Natural killer cell (primary cell): ENCODE measurements at regions of chr5 and their contacts with region 1.

Region 1: DNA sequence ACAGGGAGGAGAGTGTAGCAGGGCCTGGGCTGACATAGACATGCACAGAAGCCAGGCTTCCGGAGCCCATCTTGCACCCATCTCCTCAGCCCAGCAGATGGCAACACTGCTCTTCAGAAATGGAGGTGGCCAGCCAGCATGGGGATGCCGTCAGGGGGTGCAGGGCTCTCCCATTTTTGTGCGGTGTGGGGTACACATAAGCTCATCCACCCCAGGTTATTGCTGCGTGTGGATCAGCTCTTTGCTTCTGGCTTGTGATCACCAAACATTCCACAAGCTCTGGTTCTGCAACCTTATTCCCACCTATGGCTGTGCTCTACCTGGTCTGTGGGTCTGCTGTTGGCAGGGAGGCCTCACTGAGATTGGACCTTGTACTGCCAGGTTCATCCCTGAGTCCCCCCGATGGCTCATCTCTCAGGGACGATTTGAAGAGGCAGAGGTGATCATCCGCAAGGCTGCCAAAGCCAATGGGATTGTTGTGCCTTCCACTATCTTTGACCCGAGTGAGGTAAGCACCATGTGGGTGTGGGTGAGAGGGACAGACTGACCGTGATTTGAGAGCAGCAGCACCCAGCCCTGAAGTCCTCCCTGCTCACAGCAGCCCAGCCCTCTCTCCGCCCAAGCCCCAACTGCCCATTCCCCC is 17.3 kb downstream of the SLC22A5 start:
- DNase-seq: peak; percentile 72 to 91
- ATAC-seq: peak; percentile 90 to 94 (median 91)
- H3K4me3 ChIP-seq: no peak overlapping the region
- H3K4me3 Mint-ChIP-seq: no peak overlapping the region
- H3K27ac ChIP-seq: no peak overlapping the region
- H3K27ac Mint-ChIP-seq: peak overlapping the region; percentile 37 to 81
- H3K4me1 ChIP-seq: peaks cover 26% of the 10 kb centered on the region
- H3K4me1 Mint-ChIP-seq: peaks cover 15 to 35% of the 10 kb centered on the region in 2 donors
- H3K27me3 ChIP-seq: no peaks in the 10 kb centered on the region
- H3K27me3 Mint-ChIP-seq: no peaks in the 10 kb centered on the region
- CTCF ChIP-seq: peak; percentile 85

Region 2: DNA sequence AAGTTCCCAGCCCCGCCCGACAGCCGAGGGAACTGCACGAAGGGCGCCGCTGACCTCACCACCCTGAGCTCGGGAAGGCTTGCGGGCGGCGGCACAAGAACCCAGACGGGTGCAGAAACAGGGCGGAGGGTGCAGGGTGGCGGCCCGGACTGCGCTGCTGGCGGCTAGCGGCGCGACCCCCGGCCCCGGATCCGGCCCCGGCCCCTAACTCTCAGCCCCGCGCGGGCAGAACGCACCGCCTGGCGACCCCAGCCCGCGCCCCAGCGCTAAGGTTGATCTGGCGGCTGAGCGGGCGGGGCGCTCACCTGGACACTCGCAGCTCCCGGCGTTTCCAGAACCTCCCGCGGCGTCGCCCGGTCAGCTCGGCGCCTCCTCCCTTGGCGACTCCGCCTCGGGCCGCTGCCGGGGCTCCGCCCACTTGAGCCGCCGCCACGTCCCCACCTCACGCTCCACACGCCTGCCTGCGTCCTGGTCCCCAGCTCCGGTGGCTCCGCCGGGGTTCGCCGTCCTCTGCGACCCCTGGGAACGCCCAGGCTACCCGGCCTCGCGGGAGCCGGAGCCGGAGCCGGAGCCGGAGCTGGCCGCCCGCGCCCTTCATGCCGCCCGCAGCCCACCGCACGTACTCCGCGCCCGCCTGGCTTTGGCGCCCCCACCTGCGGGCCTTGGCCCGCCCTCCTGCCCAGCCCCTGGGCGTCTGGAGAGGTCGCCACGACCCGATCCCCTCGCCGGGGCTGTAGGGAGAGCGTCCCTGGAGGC is 159.1 kb before region 1 on chr5 and contains the start of gene P4HA2:
- intact Hi-C with region 1: no loop called
- DNase-seq: peak; percentile 26 to 34
- ATAC-seq: peak; percentile 59 to 86 (median 85)
- H3K4me3 ChIP-seq: peak within 1 kb of the TSS; percentile 17
- H3K4me3 Mint-ChIP-seq: peak within 1 kb of the TSS; percentile 59
- H3K27ac ChIP-seq: no peak within 1 kb of the TSS
- H3K27ac Mint-ChIP-seq: no peak within 1 kb of the TSS
- H3K4me1 ChIP-seq: peaks cover 11% of the 10 kb centered on the region
- H3K4me1 Mint-ChIP-seq: peaks cover 7 to 34% of the 10 kb centered on the region in 2 donors
- H3K27me3 ChIP-seq: peaks cover 7% of the 10 kb centered on the region
- H3K27me3 Mint-ChIP-seq: peaks cover 18 to 34% of the 10 kb centered on the region in 2 donors
- CTCF ChIP-seq: no peak
- total RNA-seq, gene P4HA2: 0.20 TPM in 1 of 3 donors, not detected in the others

Region 3: GRCh38 chr5:132419502-132420468 is 33.0 kb after region 1 on chr5:
- intact Hi-C with region 1: no loop called
- DNase-seq: peak; percentile 66 to 84
- ATAC-seq: peak; percentile 53 to 79 (median 73)
- H3K4me3 ChIP-seq: no peak overlapping the region
- H3K4me3 Mint-ChIP-seq: peak overlapping the region; percentile 81
- H3K27ac ChIP-seq: peak overlapping the region; percentile 84
- H3K27ac Mint-ChIP-seq: peak overlapping the region; percentile 99 to 100
- H3K4me1 ChIP-seq: peaks cover 85% of the 10 kb centered on the region
- H3K4me1 Mint-ChIP-seq: peaks cover 94 to 95% of the 10 kb centered on the region in 2 donors
- H3K27me3 ChIP-seq: no peaks in the 10 kb centered on the region
- H3K27me3 Mint-ChIP-seq: no peaks in the 10 kb centered on the region
- CTCF ChIP-seq: peak; percentile 91

Region 4: GRCh38 chr5:132500931-132501630 is 114.3 kb after region 1 on chr5:
- intact Hi-C with region 1: loop called (anchors 1 kb)
- DNase-seq: peak; percentile 68 to 92
- ATAC-seq: peak; percentile 47 to 62 (median 61)
- H3K4me3 ChIP-seq: no peak overlapping the region
- H3K4me3 Mint-ChIP-seq: no peak overlapping the region
- H3K27ac ChIP-seq: peak overlapping the region; percentile 53
- H3K27ac Mint-ChIP-seq: peak overlapping the region; percentile 95 to 100
- H3K4me1 ChIP-seq: peaks cover 50% of the 10 kb centered on the region
- H3K4me1 Mint-ChIP-seq: peaks cover 35 to 50% of the 10 kb centered on the region in 2 donors
- H3K27me3 ChIP-seq: no peaks in the 10 kb centered on the region
- H3K27me3 Mint-ChIP-seq: no peaks in the 10 kb centered on the region
- CTCF ChIP-seq: peak; percentile 84

Region 5: GRCh38 chr5:132714456-132715307 is 327.9 kb after region 1 on chr5:
- intact Hi-C with region 1: loop called (anchors 2 kb)
- DNase-seq: peak in 1 of 2 donors; percentile 40
- ATAC-seq: no peak
- H3K4me3 ChIP-seq: no peak overlapping the region
- H3K4me3 Mint-ChIP-seq: no peak overlapping the region
- H3K27ac ChIP-seq: no peak overlapping the region
- H3K27ac Mint-ChIP-seq: no peak overlapping the region
- H3K4me1 ChIP-seq: no peaks in the 10 kb centered on the region
- H3K4me1 Mint-ChIP-seq: no peaks in the 10 kb centered on the region
- H3K27me3 ChIP-seq: no peaks in the 10 kb centered on the region
- H3K27me3 Mint-ChIP-seq: no peaks in the 10 kb centered on the region
- CTCF ChIP-seq: peak; percentile 43

Region 6: GRCh38 chr5:132883261-132883834 is 496.6 kb after region 1 on chr5:
- intact Hi-C with region 1: loop called (anchors 1 kb)
- DNase-seq: peak in 1 of 2 donors; percentile 68
- ATAC-seq: peak; percentile 73 to 74 (median 73)
- H3K4me3 ChIP-seq: no peak overlapping the region
- H3K4me3 Mint-ChIP-seq: no peak overlapping the region
- H3K27ac ChIP-seq: no peak overlapping the region
- H3K27ac Mint-ChIP-seq: peak overlapping the region; percentile 43 to 70
- H3K4me1 ChIP-seq: no peaks in the 10 kb centered on the region
- H3K4me1 Mint-ChIP-seq: peaks cover 0 to 5% of the 10 kb centered on the region in 2 donors
- H3K27me3 ChIP-seq: no peaks in the 10 kb centered on the region
- H3K27me3 Mint-ChIP-seq: no peaks in the 10 kb centered on the region
- CTCF ChIP-seq: peak; percentile 44

Region 7: DNA sequence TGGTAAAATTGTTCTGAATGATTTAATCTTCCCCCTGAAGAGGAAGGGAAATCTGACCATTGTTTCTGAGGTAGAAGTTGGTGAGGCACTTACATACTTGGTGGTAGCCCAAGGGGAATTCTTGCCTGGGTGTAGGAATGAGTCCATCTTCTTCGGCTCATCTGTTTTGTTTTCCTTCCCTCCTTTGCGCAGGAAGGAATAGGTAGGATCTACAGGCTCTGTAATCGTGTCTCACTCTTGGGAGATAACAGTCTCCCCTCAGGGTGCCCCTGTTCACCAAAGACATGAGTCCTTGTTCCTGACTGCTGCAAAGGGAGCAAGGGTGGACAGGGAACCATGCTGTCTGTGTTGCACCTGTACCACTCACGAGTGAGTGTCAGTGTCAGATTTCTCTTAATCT is 803.1 kb after region 1 on chr5:
- intact Hi-C with region 1: no loop called
- DNase-seq: no peak
- ATAC-seq: no peak
- H3K4me3 ChIP-seq: no peak overlapping the region
- H3K4me3 Mint-ChIP-seq: no peak overlapping the region
- H3K27ac ChIP-seq: no peak overlapping the region
- H3K27ac Mint-ChIP-seq: no peak overlapping the region
- H3K4me1 ChIP-seq: no peaks in the 10 kb centered on the region
- H3K4me1 Mint-ChIP-seq: no peaks in the 10 kb centered on the region
- H3K27me3 ChIP-seq: no peaks in the 10 kb centered on the region
- H3K27me3 Mint-ChIP-seq: peaks cover 5 to 13% of the 10 kb centered on the region in 2 donors
- CTCF ChIP-seq: no peak